ENCODE measurements at regions of chr11 and their contacts with region 1.

Region 1: DNA sequence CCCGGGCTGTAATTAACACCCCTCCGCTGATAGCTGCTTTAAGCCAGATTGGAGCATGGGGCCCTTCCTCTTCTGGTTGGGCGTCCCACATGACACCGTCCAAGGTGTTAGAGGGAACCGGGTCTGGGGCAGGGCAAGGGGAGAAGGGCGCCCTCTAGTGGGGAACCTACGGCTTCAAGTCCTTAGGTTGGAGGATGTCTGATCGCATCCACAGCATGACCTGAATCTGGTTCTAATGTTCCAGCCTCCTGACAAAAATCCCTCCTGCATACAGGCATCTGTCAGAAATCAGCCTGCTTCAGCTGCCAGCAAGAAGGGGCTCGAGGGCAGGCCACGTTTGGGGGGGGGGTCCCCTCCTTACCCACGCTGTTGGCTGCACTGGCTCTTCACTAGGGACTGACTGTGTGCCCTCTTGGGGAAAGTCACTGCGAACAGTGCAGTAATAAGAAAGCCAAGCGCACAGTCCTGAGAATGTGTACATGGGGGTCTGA is 94.2 kb upstream of the TBCEL start:
- DNase-seq: peak; percentile 40
- H3K4me3 ChIP-seq: no peak overlapping the region
- H3K27ac ChIP-seq: no peak overlapping the region
- H3K4me1 ChIP-seq: no peaks in the 10 kb centered on the region
- H3K27me3 ChIP-seq: no peaks in the 10 kb centered on the region
- CTCF ChIP-seq: peak; percentile 67 to 80
- POLR2A ChIP-seq: no peak

Region 2: DNA sequence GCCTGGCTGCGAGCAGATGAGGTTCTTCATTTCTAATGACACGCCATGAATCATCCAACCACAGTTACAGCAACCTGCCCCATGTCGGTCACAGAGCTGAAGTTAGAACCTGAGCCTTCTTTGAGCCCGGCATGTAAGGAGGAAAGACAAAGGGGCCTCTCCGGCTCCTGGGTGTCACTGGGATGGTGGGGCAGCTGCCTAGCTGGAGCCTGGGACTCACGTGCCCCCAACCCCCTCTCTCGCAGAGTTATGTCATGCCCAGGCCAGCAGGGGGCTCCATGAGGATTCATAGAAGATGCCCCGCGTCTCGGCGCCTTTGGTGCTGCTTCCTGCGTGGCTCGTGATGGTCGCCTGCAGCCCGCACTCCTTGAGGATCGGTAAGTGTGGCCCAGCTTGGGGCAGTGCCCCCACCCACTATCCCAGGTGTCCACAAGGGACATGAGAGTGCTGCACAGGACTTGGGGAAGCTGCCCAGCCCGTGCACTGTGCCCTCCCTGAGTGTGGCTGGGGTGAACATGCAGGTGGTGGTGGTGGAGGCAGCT is 269.6 kb before region 1 on chr11:
- CTCF ChIA-PET with region 1: interaction called, 3 read pairs
- POLR2A ChIA-PET with region 1: no interaction called
- dilution Hi-C with region 1: no loop called
- intact Hi-C with region 1: loop called (anchors 1 kb)
- DNase-seq: peak; percentile 19
- H3K4me3 ChIP-seq: no peak overlapping the region
- H3K27ac ChIP-seq: no peak overlapping the region
- H3K4me1 ChIP-seq: no peaks in the 10 kb centered on the region
- H3K27me3 ChIP-seq: peaks cover 0 to 7% of the 10 kb centered on the region in 2 experiments
- CTCF ChIP-seq: peak; percentile 44 to 63
- POLR2A ChIP-seq: no peak

Region 3: GRCh38 chr11:120756931-120757330 is 172.8 kb before region 1 on chr11:
- CTCF ChIA-PET with region 1: interaction called, 4 read pairs
- POLR2A ChIA-PET with region 1: no interaction called
- dilution Hi-C with region 1: no loop called
- intact Hi-C with region 1: loop called (anchors 10 kb)
- DNase-seq: peak; percentile 6
- H3K4me3 ChIP-seq: no peak overlapping the region
- H3K27ac ChIP-seq: no peak overlapping the region
- H3K4me1 ChIP-seq: no peaks in the 10 kb centered on the region
- H3K27me3 ChIP-seq: no peaks in the 10 kb centered on the region
- CTCF ChIP-seq: peak in 1 of 2 donors; percentile 23
- POLR2A ChIP-seq: no peak

Region 4: GRCh38 chr11:120858740-120859139 is 71.0 kb before region 1 on chr11:
- CTCF ChIA-PET with region 1: no interaction called
- POLR2A ChIA-PET with region 1: no interaction called
- dilution Hi-C with region 1: no loop called
- intact Hi-C with region 1: no loop called
- DNase-seq: peak; percentile 19
- H3K4me3 ChIP-seq: no peak overlapping the region
- H3K27ac ChIP-seq: no peak overlapping the region
- H3K4me1 ChIP-seq: no peaks in the 10 kb centered on the region
- H3K27me3 ChIP-seq: no peaks in the 10 kb centered on the region
- CTCF ChIP-seq: no peak
- POLR2A ChIP-seq: no peak

Region 5: GRCh38 chr11:120952461-120953434 is 23.0 kb after region 1 on chr11:
- CTCF ChIA-PET with region 1: interaction called, 7 read pairs
- POLR2A ChIA-PET with region 1: no interaction called
- dilution Hi-C with region 1: no loop called
- intact Hi-C with region 1: loop called (anchors 1 kb)
- DNase-seq: peak; percentile 65
- H3K4me3 ChIP-seq: no peak overlapping the region
- H3K27ac ChIP-seq: no peak overlapping the region
- H3K4me1 ChIP-seq: no peaks in the 10 kb centered on the region
- H3K27me3 ChIP-seq: no peaks in the 10 kb centered on the region
- CTCF ChIP-seq: peak; percentile 39 to 77
- POLR2A ChIP-seq: no peak

Region 6: DNA sequence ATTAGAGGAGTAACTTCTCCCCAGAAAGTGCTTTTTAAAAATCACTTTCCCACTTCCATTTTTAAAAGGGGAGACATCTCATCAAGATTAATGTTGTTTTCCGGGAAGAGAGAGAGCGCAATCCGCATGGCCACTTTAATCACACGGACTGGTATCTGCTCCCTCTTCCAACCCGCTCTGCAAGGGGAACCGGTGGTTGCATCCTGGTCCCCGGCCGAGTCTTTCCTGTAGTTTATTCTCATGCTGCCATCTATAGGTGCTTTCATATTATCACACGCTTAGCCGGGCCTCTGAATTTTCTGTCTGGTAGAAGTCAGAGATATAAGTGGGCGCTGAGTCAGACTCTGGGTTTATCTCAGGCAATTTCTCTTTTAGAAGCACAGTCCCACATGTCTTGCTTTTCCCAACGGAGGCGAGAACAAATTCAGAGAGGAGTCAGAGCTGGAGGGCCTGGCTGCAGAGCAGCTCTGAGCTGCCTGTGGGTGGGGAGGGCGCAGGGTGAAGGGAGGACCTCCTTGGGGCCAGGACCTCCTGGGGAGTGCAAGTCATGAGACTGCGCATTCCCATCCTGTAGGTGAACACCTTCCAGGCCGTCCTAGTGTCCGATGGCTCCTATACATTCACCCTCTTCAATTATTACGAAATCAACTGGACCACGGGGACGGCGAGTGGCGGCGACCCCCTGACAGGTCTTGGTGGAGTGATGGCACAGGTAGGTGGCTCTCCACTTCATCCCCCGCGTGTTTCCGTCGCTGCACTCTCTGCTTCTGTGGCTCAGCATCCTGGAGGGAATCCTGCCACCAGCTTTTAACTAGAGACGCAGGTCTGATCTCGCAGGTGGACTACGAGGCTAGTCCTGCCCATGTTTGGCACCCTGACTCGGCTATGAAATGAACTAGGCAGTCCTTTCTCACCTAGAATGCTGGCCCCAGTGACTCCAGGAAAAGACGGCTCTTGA is 183.1 kb after region 1 on chr11:
- CTCF ChIA-PET with region 1: interaction called, 8 read pairs
- POLR2A ChIA-PET with region 1: no interaction called
- dilution Hi-C with region 1: no loop called
- intact Hi-C with region 1: loop called (anchors 1 kb)
- DNase-seq: peak; percentile 54
- H3K4me3 ChIP-seq: no peak overlapping the region
- H3K27ac ChIP-seq: no peak overlapping the region
- H3K4me1 ChIP-seq: peaks cover 8% of the 10 kb centered on the region
- H3K27me3 ChIP-seq: peaks cover 0 to 7% of the 10 kb centered on the region in 2 experiments
- CTCF ChIP-seq: peak; percentile 39 to 45
- POLR2A ChIP-seq: no peak

Measured in endothelial cell of umbilical vein (primary cell).